Activated CD8-positive, alpha-beta memory T cell treated with anti-CD3 and anti-CD28 coated beads, Interleukin-2, amount 10 ng/mL, durations not matched to agents 7 days and 5 days (primary cell): ENCODE measurements at regions of chr19 and their contacts with region 1.

Region 1: DNA sequence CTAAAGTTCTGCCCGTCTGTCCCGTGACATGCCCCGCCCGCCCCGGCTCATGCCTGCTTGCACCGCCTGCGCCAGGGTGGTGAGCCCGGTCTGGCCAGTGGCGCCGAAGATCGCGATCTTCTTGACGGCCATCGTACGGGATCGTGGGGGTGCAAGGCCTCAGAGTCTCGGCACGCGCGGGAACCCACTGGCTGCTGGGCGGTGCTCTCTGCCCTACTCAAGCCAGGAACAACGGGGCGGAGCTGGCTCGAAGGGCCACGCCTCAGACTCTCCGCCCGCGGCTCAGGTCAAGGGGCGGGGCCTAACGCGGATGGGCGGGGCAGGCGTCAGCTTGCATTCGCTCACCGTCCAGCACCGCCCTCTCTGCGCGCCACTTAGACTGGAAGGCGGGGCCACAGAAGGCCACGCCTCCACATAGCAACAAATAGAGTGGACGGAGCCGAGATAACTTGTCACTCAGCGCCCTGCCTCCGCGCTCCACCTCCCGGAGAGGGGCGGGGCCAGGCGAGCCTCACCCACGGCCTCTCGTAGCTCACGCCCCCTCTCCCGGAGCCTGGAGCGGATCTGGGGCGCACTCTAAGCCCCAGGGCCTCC is at the start of gene BLVRB:
- DNase-seq: peak; percentile 99
- ATAC-seq: peak; percentile 88
- H3K4me3 Mint-ChIP-seq: peak within 1 kb of the TSS; percentile 79
- H3K27ac Mint-ChIP-seq: peak within 1 kb of the TSS; percentile 85
- H3K4me1 Mint-ChIP-seq: peaks cover 34% of the 10 kb centered on the region
- H3K27me3 Mint-ChIP-seq: peaks cover 23% of the 10 kb centered on the region
- total RNA-seq, gene BLVRB: 12.9 to 23.3 TPM

Region 2: GRCh38 chr19:40331069-40331468 is 134.6 kb before region 1 on chr19:
- CTCF ChIA-PET with region 1: no interaction called
- DNase-seq: no peak
- ATAC-seq: no peak
- H3K4me3 Mint-ChIP-seq: no peak overlapping the region
- H3K27ac Mint-ChIP-seq: no peak overlapping the region
- H3K4me1 Mint-ChIP-seq: no peaks in the 10 kb centered on the region
- H3K27me3 Mint-ChIP-seq: no peaks in the 10 kb centered on the region

Region 3: DNA sequence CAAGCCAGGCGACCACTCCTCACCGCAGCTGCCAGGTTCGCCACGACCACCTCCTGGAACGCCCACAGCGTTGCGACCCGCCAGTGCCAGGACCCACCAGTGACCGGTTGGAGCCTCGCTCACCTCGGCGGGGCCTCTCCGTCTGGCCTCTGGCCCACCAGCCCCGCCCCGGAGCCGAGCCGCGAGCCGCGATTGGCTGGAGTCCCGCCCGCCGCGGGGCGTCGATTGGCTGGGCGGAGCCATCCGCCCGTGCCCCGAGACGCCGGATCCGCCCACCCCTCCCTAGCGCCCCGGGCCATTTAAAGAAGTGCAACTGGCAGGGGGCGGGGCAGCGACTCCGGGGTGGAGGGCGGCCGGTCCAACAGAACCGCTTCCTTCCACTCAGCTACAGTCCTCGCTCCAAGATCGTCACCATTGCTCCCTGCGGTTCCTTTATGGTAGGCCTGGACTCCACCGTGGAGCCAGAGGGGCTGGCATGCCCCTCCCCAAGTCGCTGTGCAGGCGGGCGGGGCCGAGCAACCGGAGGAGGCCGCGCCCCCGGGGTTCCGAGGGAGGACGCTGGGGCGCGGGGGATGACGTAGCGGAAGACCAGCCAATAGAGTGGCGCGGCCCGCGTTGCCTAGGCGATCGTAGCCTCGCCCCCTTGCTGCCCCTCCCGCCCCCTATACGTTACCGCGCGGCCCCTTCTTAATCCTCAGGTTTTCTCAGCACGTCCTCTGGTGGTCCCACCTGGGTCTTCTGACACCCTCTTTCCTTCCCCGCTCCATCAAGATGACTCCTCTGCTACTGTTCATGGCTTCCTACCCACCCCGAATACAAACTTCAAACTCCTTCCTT is 21.2 kb before region 1 on chr19 and contains the start of gene SERTAD3:
- CTCF ChIA-PET with region 1: interaction called, 28 read pairs
- DNase-seq: peak; percentile 98
- ATAC-seq: peak; percentile 80
- H3K4me3 Mint-ChIP-seq: peak within 1 kb of the TSS; percentile 95
- H3K27ac Mint-ChIP-seq: peak within 1 kb of the TSS; percentile 97
- H3K4me1 Mint-ChIP-seq: peaks cover 21% of the 10 kb centered on the region
- H3K27me3 Mint-ChIP-seq: no peaks in the 10 kb centered on the region
- total RNA-seq, gene SERTAD3: 13.4 to 13.7 TPM

Region 4: DNA sequence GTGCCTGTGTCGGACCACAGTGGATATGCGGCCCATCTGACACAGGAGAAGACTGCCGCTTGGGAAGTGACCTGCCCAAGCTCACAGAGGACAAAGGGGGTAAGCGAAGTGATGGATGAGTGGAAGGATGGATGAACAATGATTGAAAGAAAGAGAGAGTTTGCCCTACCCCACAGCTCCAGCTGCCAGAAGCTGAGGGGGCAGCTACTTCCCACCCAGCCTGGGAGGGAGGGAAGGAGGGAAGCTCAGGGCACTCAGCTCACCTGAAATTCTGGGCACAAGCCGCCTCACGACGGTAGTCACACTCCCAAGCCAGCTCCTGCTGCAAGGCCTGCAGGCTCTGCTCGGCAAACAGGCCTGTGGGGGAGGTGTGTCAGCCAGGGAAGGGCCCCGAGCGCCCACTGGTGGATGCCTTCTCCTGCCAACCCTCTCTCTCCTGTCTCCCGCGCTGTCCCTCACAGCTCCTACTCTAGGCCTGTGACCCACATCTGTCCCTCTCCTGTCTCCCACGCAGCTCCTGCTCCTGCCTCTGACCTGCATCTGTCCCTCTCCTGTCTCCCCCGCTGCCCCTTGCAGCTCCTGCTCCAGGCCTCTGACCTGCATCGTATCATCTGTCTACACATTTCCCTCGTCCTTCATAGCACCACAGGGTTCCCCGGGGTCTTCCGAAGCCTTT is 236.8 kb after region 1 on chr19:
- CTCF ChIA-PET with region 1: no interaction called
- DNase-seq: no peak
- ATAC-seq: no peak
- H3K4me3 Mint-ChIP-seq: no peak overlapping the region
- H3K27ac Mint-ChIP-seq: no peak overlapping the region
- H3K4me1 Mint-ChIP-seq: no peaks in the 10 kb centered on the region
- H3K27me3 Mint-ChIP-seq: no peaks in the 10 kb centered on the region